ENCODE measurements at regions of chr18 and their contacts with region 1.

Region 1: DNA sequence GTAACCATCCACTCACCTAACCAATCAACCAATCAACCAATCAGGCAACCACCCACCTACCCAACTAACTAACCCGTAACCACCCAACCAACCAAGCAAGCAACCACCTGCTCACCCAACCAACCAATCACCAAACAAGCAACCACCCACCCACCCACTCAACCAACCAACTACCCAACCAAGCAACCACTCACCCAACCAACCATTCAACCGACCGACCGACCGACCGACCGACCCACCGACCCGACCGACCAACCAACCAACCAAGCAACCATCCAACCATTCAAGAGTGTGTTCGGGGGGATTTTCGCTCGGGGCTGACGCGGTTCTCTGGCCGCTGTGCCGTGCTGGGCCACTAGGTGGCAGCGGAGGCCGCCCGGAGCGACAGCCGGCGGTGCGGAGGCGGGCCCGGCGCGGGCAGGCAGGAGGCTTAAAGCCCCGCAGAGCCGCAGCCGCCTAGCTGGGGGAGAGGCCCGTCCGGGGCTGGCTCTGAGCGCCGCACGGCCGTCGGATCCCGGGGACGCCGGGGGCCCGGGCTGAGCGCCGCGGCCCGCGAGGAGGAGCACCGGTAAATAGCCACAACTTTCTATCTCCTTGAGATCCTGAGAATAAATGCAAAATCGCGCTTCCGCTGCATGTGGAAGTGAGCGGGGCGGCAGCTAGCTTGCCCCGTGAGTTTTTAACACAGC is at the start of gene MC5R:
- DNase-seq: peak; percentile 65 to 81
- ATAC-seq: peak; percentile 92 to 99 (median 96)
- H3K4me3 ChIP-seq: peak within 1 kb of the TSS; percentile 68
- H3K27ac ChIP-seq: no peak within 1 kb of the TSS
- H3K4me1 ChIP-seq: peaks cover 3% of the 10 kb centered on the region
- H3K27me3 ChIP-seq: peaks cover 0 to 20% (median 5%) of the 10 kb centered on the region in 3 donors
- CTCF ChIP-seq: peak; percentile 84
- total RNA-seq, gene MC5R: not detected

Region 2: GRCh38 chr18:13653746-13654433 is 170.0 kb before region 1 on chr18:
- intact Hi-C with region 1: no loop called
- DNase-seq: no peak
- ATAC-seq: peak in 1 of 4 donors; percentile 35
- H3K4me3 ChIP-seq: no peak overlapping the region
- H3K27ac ChIP-seq: no peak overlapping the region
- H3K4me1 ChIP-seq: no peaks in the 10 kb centered on the region
- H3K27me3 ChIP-seq: no peaks in the 10 kb centered on the region
- CTCF ChIP-seq: no peak

Region 3: GRCh38 chr18:13800505-13801259 is 23.2 kb before region 1 on chr18:
- intact Hi-C with region 1: no loop called
- DNase-seq: peak; percentile 60 to 69
- ATAC-seq: peak; percentile 81 to 92 (median 82)
- H3K4me3 ChIP-seq: peak overlapping the region; percentile 55
- H3K27ac ChIP-seq: no peak overlapping the region
- H3K4me1 ChIP-seq: no peaks in the 10 kb centered on the region
- H3K27me3 ChIP-seq: peaks cover 0 to 23% (median 5%) of the 10 kb centered on the region in 3 donors
- CTCF ChIP-seq: peak; percentile 47

Region 4: GRCh38 chr18:13878858-13879257 is 55.0 kb after region 1 on chr18:
- intact Hi-C with region 1: no loop called
- DNase-seq: no peak
- ATAC-seq: no peak
- H3K4me3 ChIP-seq: no peak overlapping the region
- H3K27ac ChIP-seq: no peak overlapping the region
- H3K4me1 ChIP-seq: no peaks in the 10 kb centered on the region
- H3K27me3 ChIP-seq: no peaks in the 10 kb centered on the region
- CTCF ChIP-seq: no peak

Region 5: DNA sequence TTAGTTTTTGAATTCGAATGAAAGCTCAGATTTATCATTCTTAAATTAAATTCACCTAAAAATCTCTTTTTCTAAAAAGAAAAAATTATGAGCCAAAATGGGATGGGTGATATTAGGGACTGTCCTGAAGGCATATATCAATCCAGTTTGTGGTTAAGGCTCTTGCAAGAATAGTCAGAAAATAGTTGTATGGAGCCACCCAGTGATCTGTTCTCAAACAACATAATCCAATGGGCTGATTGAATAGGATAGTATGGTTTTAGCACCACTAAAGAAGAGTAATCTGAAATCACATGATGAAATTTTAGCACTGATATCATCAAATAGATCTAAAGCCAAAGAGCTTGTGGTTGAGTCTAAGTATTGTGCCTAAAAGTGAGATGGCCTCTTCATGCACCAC is 220.1 kb after region 1 on chr18:
- intact Hi-C with region 1: no loop called
- DNase-seq: no peak
- ATAC-seq: no peak
- H3K4me3 ChIP-seq: no peak overlapping the region
- H3K27ac ChIP-seq: no peak overlapping the region
- H3K4me1 ChIP-seq: no peaks in the 10 kb centered on the region
- H3K27me3 ChIP-seq: no peaks in the 10 kb centered on the region
- CTCF ChIP-seq: no peak

Region 6: DNA sequence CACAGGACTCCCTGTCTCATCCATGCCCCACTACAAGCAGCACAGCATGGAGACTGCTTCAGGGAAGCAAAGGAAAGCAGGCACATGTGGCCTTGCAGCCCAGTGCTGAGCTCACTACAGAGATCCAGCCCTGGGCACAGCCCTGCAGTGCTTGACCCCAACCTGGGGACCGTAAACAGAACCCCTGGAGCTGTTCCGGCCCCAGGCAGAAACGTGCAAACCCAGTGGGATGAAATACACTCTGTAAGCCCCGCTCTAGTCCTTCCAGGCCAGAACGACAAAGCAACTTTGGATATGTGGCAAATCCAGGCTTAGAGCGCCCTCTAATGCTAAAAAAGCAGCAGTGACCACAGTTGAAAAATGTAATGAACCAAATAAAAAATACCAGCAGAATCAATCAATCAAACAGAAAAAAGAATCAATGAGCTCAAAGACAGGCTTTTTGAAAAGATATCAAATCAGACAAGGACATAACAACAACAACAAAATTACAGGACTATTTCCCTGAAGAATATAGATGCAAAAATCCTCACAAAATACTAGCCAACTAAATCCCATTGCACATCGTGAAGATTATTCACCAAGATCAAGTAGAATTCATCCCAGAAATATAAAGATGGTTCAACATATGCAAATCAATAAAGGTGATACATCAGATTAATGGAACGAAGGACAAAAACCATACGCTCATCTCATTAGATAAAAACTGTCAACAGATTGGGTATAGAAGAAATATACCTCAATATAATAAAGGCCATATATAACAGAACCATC is 262.8 kb after region 1 on chr18:
- intact Hi-C with region 1: loop called (anchors 1 to 5 kb)
- DNase-seq: no peak
- ATAC-seq: peak in 3 of 4 donors; percentile 43 to 67 (median 53)
- H3K4me3 ChIP-seq: no peak overlapping the region
- H3K27ac ChIP-seq: no peak overlapping the region
- H3K4me1 ChIP-seq: no peaks in the 10 kb centered on the region
- H3K27me3 ChIP-seq: no peaks in the 10 kb centered on the region
- CTCF ChIP-seq: peak; percentile 52

Measured in psoas muscle (tissue), 8 donors.